Naive thymus-derived CD4-positive, alpha-beta T cell (primary cell): ENCODE measurements at regions of chr4 and their contacts with region 1.

Region 1: DNA sequence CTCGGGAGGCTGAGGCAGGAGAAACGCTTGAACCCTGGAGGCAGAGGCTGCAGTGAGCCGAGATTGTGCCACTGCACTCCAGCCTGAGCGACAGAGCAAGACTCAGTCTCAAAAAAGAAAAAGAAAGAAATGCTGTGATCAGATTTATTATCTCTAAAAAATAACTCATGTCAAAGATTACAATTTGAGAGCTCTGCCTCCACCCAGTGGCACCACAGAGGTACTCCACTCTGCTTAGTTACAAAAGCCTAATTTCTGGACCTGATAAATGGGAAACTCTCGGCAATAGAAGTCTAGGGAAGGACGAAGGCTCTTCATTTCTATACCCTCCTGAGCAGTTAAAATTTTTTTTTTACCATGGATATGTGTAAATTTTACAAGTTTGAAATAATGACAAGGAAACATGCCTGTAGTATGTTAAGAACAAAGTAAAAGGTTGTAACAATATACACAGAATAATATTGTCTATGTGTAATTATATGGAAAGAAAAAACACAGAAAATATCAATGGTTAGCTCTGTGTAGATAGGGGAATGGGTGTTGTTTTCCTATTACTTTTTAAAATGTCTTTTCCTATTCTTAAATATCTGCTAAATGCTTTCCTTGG is 149.8 kb downstream of the STIM2 start:
- DNase-seq: peak; percentile 17 to 67 (median 52)
- ATAC-seq: peak; percentile 89
- H3K4me3 ChIP-seq: no peak overlapping the region
- H3K4me3 Mint-ChIP-seq: no peak overlapping the region
- H3K27ac ChIP-seq: no peak overlapping the region
- H3K27ac Mint-ChIP-seq: peak overlapping the region in 7 of 9 donors; percentile 6 to 91 (median 71)
- H3K4me1 ChIP-seq: no peaks in the 10 kb centered on the region
- H3K4me1 Mint-ChIP-seq: peaks cover 6 to 25% (median 14%) of the 10 kb centered on the region in 7 donors
- H3K27me3 ChIP-seq: no peaks in the 10 kb centered on the region
- H3K27me3 Mint-ChIP-seq: no peaks in the 10 kb centered on the region

Region 2: GRCh38 chr4:25986807-25987206 is 1023.6 kb before region 1 on chr4:
- CTCF ChIA-PET with region 1: no interaction called
- POLR2A ChIA-PET with region 1: no interaction called
- intact Hi-C with region 1: loop called (anchors 1 to 5 kb)
- DNase-seq: no peak
- ATAC-seq: no peak
- H3K4me3 ChIP-seq: no peak overlapping the region
- H3K4me3 Mint-ChIP-seq: no peak overlapping the region
- H3K27ac ChIP-seq: no peak overlapping the region
- H3K27ac Mint-ChIP-seq: no peak overlapping the region
- H3K4me1 ChIP-seq: no peaks in the 10 kb centered on the region
- H3K4me1 Mint-ChIP-seq: peaks cover 0 to 8% (median 0%) of the 10 kb centered on the region in 7 donors
- H3K27me3 ChIP-seq: no peaks in the 10 kb centered on the region
- H3K27me3 Mint-ChIP-seq: peaks cover 0 to 6% (median 0%) of the 10 kb centered on the region in 5 donors

Region 3: GRCh38 chr4:26081795-26082498 is 928.5 kb before region 1 on chr4:
- CTCF ChIA-PET with region 1: no interaction called
- POLR2A ChIA-PET with region 1: no interaction called
- intact Hi-C with region 1: loop called in 1 of 2 experiments (anchors 2 kb)
- DNase-seq: peak in 5 of 9 donors; percentile 16 to 29 (median 22)
- ATAC-seq: peak; percentile 66
- H3K4me3 ChIP-seq: no peak overlapping the region
- H3K4me3 Mint-ChIP-seq: peak overlapping the region in 1 of 10 donors; percentile 49
- H3K27ac ChIP-seq: no peak overlapping the region
- H3K27ac Mint-ChIP-seq: peak overlapping the region in 1 of 9 donors; percentile 73
- H3K4me1 ChIP-seq: no peaks in the 10 kb centered on the region
- H3K4me1 Mint-ChIP-seq: peaks cover 0 to 65% (median 6%) of the 10 kb centered on the region in 7 donors
- H3K27me3 ChIP-seq: no peaks in the 10 kb centered on the region
- H3K27me3 Mint-ChIP-seq: peaks cover 0 to 38% (median 7%) of the 10 kb centered on the region in 5 donors

Region 4: GRCh38 chr4:26330186-26330787 is 680.1 kb before region 1 on chr4:
- CTCF ChIA-PET with region 1: interaction called, 4 read pairs
- POLR2A ChIA-PET with region 1: no interaction called
- intact Hi-C with region 1: loop called (anchors 1 to 5 kb)
- DNase-seq: peak in 7 of 9 donors; percentile 19 to 50 (median 46)
- ATAC-seq: peak; percentile 86
- H3K4me3 ChIP-seq: no peak overlapping the region
- H3K4me3 Mint-ChIP-seq: peak overlapping the region in 4 of 10 donors; percentile 11 to 44 (median 32)
- H3K27ac ChIP-seq: no peak overlapping the region
- H3K27ac Mint-ChIP-seq: peak overlapping the region in 2 of 9 donors; percentile 3 to 60
- H3K4me1 ChIP-seq: no peaks in the 10 kb centered on the region
- H3K4me1 Mint-ChIP-seq: peaks cover 30 to 60% (median 52%) of the 10 kb centered on the region in 7 donors
- H3K27me3 ChIP-seq: no peaks in the 10 kb centered on the region
- H3K27me3 Mint-ChIP-seq: no peaks in the 10 kb centered on the region

Region 5: DNA sequence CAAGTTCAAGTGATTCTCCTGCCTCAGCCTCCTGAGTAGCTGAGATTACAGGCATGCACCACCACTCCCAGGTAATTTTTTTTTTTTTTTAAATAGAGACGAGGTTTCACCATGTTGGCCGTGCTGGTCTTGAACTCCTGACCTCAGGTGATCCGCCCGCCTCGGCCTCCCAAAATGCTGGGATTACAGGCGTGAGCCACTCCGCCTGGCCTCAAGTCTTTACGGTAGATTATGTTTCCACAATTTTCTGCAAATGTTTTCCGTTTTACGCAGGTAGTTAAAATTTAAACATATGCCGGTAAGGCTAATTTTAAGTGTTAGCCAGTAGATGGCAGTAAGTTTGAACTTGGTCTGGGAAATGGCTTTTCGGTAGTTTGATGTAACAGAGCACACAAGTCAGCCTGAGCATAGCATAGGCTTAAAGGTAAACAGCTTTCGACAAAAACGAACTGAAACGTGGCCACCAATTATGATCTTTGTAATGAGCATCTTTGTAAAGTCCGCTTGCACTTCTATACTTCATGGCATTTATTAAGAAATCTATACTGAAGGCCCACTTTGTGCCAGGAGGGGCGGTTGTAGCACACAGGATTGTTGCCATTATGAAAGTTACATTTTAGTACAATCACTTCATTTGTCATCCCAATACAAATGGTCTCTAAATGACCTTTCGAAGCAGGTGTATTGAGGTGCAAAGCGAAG is 551.2 kb before region 1 on chr4:
- CTCF ChIA-PET with region 1: no interaction called
- POLR2A ChIA-PET with region 1: no interaction called
- intact Hi-C with region 1: loop called (anchors 1 kb)
- DNase-seq: peak in 7 of 9 donors; percentile 15 to 62 (median 51)
- ATAC-seq: peak; percentile 62
- H3K4me3 ChIP-seq: no peak overlapping the region
- H3K4me3 Mint-ChIP-seq: peak overlapping the region in 9 of 10 donors; percentile 21 to 82 (median 61)
- H3K27ac ChIP-seq: no peak overlapping the region
- H3K27ac Mint-ChIP-seq: peak overlapping the region in 5 of 9 donors; percentile 5 to 68 (median 60)
- H3K4me1 ChIP-seq: peaks cover 0 to 16% of the 10 kb centered on the region in 2 donors
- H3K4me1 Mint-ChIP-seq: peaks cover 0 to 30% (median 20%) of the 10 kb centered on the region in 7 donors
- H3K27me3 ChIP-seq: no peaks in the 10 kb centered on the region
- H3K27me3 Mint-ChIP-seq: no peaks in the 10 kb centered on the region

Region 6: GRCh38 chr4:26719954-26720552 is 290.4 kb before region 1 on chr4:
- CTCF ChIA-PET with region 1: no interaction called
- POLR2A ChIA-PET with region 1: no interaction called
- intact Hi-C with region 1: loop called (anchors 2 to 5 kb)
- DNase-seq: no peak
- ATAC-seq: no peak
- H3K4me3 ChIP-seq: no peak overlapping the region
- H3K4me3 Mint-ChIP-seq: no peak overlapping the region
- H3K27ac ChIP-seq: no peak overlapping the region
- H3K27ac Mint-ChIP-seq: no peak overlapping the region
- H3K4me1 ChIP-seq: peaks cover 5 to 9% of the 10 kb centered on the region in 2 donors
- H3K4me1 Mint-ChIP-seq: peaks cover 0 to 23% (median 13%) of the 10 kb centered on the region in 7 donors
- H3K27me3 ChIP-seq: no peaks in the 10 kb centered on the region
- H3K27me3 Mint-ChIP-seq: no peaks in the 10 kb centered on the region